ENCODE measurements at regions of chr1 and their contacts with region 1.

Region 1: DNA sequence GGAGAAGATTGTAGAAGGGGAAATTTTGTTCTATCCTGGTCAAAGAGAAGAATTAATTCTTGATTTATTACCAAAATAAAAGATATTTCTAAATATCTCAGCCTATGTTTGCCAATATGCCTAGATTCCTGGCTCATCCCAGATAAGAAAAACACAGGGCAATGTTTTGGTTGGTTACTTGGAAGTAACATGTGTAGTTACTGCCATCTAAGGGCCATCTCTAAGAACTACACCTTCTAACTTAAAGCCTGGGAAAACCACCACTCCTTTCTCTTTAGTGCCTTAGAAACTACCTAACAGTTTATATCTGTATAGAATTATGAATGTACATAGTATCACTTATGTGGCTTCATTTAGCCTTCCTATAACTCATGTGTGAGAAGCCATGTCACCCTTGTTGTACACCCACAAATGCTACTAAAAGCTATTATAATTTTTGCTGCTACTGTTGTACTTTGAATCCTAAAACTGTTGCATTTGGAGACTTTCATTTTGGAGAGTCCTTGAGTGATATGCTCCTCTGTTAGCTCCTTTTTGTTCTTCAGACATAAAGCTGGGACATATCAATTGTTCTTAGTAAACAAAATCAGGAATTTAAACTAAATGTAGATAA is 4.5 kb downstream of the AIM2 start:
- DNase-seq: peak; percentile 69
- ATAC-seq: no peak
- H3K4me3 ChIP-seq: no peak overlapping the region
- H3K4me3 Mint-ChIP-seq: peak overlapping the region; percentile 68
- H3K27ac ChIP-seq: peak overlapping the region in 1 of 2 donors; percentile 89
- H3K27ac Mint-ChIP-seq: peak overlapping the region; percentile 86
- H3K4me1 ChIP-seq: peaks cover 56 to 62% of the 10 kb centered on the region in 2 donors
- H3K4me1 Mint-ChIP-seq: peaks cover 65% of the 10 kb centered on the region
- H3K27me3 ChIP-seq: no peaks in the 10 kb centered on the region
- H3K27me3 Mint-ChIP-seq: no peaks in the 10 kb centered on the region
- CTCF ChIP-seq: peak; percentile 94

Region 2: DNA sequence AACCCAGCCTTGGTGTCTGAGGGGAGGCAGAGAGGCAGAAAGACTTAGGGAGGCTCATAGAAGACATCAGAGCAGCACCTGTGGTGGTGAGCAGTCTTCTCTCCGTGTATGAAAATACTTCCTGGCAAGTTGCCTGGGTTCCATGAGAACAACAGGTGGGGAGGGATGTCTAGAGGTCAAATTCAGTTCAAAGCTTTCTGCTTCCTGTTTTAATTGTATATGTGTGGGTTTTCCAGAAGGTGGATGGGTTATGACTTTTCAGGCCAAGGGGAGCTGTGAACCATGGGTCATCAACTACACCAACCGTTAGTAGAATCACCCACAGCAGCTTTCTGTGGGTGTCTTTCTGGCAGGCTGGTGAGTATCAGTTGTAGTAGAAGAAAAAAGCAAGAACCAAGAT is 1291.0 kb before region 1 on chr1:
- CTCF ChIA-PET with region 1: no interaction called
- POLR2A ChIA-PET with region 1: no interaction called
- intact Hi-C with region 1: loop called (anchors 10 kb)
- DNase-seq: peak; percentile 45
- ATAC-seq: peak; percentile 6
- H3K4me3 ChIP-seq: peak overlapping the region in 1 of 5 experiments; percentile 17
- H3K4me3 Mint-ChIP-seq: peak overlapping the region; percentile 64
- H3K27ac ChIP-seq: peak overlapping the region; percentile 31 to 53
- H3K27ac Mint-ChIP-seq: peak overlapping the region; percentile 93
- H3K4me1 ChIP-seq: peaks cover 83 to 90% of the 10 kb centered on the region in 2 donors
- H3K4me1 Mint-ChIP-seq: peaks cover 87% of the 10 kb centered on the region
- H3K27me3 ChIP-seq: no peaks in the 10 kb centered on the region
- H3K27me3 Mint-ChIP-seq: no peaks in the 10 kb centered on the region
- CTCF ChIP-seq: no peak

Region 3: GRCh38 chr1:158203693-158204457 is 868.2 kb before region 1 on chr1:
- CTCF ChIA-PET with region 1: interaction called, 27 read pairs
- POLR2A ChIA-PET with region 1: no interaction called
- intact Hi-C with region 1: loop called (anchors 2 kb)
- DNase-seq: peak; percentile 75
- ATAC-seq: peak; percentile 75
- H3K4me3 ChIP-seq: peak overlapping the region in 4 of 5 experiments; percentile 16 to 42 (median 30)
- H3K4me3 Mint-ChIP-seq: peak overlapping the region; percentile 74
- H3K27ac ChIP-seq: peak overlapping the region; percentile 4 to 72
- H3K27ac Mint-ChIP-seq: peak overlapping the region; percentile 70
- H3K4me1 ChIP-seq: peaks cover 11 to 14% of the 10 kb centered on the region in 2 donors
- H3K4me1 Mint-ChIP-seq: peaks cover 22% of the 10 kb centered on the region
- H3K27me3 ChIP-seq: no peaks in the 10 kb centered on the region
- H3K27me3 Mint-ChIP-seq: no peaks in the 10 kb centered on the region
- CTCF ChIP-seq: peak; percentile 95

Region 4: DNA sequence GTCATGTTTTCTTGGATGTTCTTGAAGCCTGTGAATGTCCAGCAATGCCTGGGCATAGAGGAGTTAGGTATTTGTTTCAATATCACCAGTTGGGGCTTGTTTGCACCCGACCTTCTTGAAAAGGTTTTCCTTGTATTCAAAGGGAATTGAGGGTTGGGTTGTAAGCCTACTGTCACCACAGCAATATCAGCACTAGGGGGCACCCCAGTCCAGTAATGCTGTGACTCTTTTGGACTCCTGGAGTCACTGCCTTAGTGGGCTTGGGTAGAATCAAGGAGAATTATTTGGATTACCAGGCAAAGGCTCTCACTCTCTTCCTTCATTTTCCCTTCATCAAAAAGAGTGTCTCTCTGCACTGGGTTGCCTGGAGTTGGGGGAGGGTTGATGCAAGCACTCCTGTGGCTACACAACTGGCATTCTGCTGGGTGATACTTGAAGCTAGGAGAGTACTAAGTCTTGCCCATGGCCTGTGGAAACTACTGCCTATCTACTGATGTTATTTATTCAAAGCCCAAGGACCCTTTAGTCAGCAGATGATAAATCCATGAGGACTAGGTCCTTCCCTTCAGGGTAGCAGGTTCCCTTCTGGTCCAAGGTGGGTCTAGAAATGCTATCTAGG is 565.6 kb before region 1 on chr1:
- CTCF ChIA-PET with region 1: interaction called, 10 read pairs
- POLR2A ChIA-PET with region 1: no interaction called
- intact Hi-C with region 1: loop called (anchors 5 kb)
- DNase-seq: peak; percentile 49
- ATAC-seq: peak; percentile 58
- H3K4me3 ChIP-seq: no peak overlapping the region
- H3K4me3 Mint-ChIP-seq: no peak overlapping the region
- H3K27ac ChIP-seq: no peak overlapping the region
- H3K27ac Mint-ChIP-seq: no peak overlapping the region
- H3K4me1 ChIP-seq: no peaks in the 10 kb centered on the region
- H3K4me1 Mint-ChIP-seq: no peaks in the 10 kb centered on the region
- H3K27me3 ChIP-seq: peaks cover 0 to 9% (median 0%) of the 10 kb centered on the region in 4 experiments
- H3K27me3 Mint-ChIP-seq: peaks cover 39% of the 10 kb centered on the region
- CTCF ChIP-seq: peak; percentile 58

Region 5: DNA sequence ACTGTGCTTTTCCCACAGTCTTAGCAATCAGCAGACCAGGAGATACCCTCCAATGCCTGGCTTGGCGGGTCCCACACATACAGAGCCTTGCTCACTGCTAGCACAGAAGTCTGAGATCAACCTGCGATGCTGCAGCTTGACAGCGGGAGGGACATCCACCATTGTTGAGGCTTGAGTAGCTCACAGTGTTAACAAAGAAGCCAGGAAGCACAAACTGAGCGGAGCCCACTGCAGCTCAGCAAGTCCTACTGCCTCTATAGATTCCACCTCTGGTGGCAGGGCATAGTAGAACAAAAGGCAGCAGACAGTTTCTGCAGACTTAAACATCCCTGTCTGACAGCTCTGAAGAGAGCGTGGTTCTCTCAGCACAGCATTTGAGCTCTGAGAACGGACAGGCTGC is 207.5 kb before region 1 on chr1:
- CTCF ChIA-PET with region 1: no interaction called
- POLR2A ChIA-PET with region 1: no interaction called
- intact Hi-C with region 1: no loop called
- DNase-seq: no peak
- ATAC-seq: no peak
- H3K4me3 ChIP-seq: no peak overlapping the region
- H3K4me3 Mint-ChIP-seq: no peak overlapping the region
- H3K27ac ChIP-seq: no peak overlapping the region
- H3K27ac Mint-ChIP-seq: no peak overlapping the region
- H3K4me1 ChIP-seq: no peaks in the 10 kb centered on the region
- H3K4me1 Mint-ChIP-seq: no peaks in the 10 kb centered on the region
- H3K27me3 ChIP-seq: peaks cover 0 to 8% (median 0%) of the 10 kb centered on the region in 4 experiments
- H3K27me3 Mint-ChIP-seq: peaks cover 35% of the 10 kb centered on the region
- CTCF ChIP-seq: no peak

Region 6: GRCh38 chr1:158998781-158999161 is 73.3 kb before region 1 on chr1:
- CTCF ChIA-PET with region 1: interaction called, 19 read pairs
- POLR2A ChIA-PET with region 1: interaction called, 3 read pairs
- intact Hi-C with region 1: loop called (anchors 1 kb)
- DNase-seq: peak; percentile 80
- ATAC-seq: peak; percentile 73
- H3K4me3 ChIP-seq: no peak overlapping the region
- H3K4me3 Mint-ChIP-seq: peak overlapping the region; percentile 55
- H3K27ac ChIP-seq: no peak overlapping the region
- H3K27ac Mint-ChIP-seq: no peak overlapping the region
- H3K4me1 ChIP-seq: peaks cover 6 to 12% of the 10 kb centered on the region in 2 donors
- H3K4me1 Mint-ChIP-seq: peaks cover 22% of the 10 kb centered on the region
- H3K27me3 ChIP-seq: no peaks in the 10 kb centered on the region
- H3K27me3 Mint-ChIP-seq: no peaks in the 10 kb centered on the region
- CTCF ChIP-seq: peak; percentile 98

Region 7: DNA sequence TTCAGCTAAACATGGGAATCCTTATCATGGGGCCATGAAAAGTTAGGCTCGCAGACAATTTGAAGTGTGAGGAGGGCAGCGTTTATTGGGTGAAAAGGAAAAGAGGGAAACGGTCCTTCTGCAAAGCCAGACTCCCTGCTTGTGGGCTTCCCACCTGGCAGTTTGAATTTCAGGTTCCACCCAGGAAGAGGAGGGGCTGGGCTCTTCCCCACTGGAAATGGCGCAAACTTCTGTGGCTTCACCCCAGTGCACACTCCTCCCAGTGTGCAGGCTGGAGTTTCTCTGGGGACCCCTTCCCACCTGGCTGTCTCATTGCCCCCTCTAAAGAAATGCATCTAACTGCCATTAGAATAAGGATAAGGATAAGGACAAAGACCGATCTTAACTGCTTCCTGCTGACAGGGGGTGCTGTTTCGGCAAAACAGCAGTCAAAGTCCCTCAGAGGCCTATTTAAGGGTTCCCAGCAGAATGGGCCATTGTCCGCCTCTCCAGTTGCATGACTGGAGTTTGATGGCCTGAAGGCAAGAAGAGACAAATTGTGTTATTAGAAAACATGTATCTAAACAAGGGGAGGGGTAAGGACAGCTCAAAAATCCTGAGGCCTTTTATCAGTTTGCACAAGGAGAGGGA is 15.9 kb before region 1 on chr1:
- CTCF ChIA-PET with region 1: interaction called, 222 read pairs
- POLR2A ChIA-PET with region 1: interaction called, 8 read pairs
- intact Hi-C with region 1: loop called (anchors 1 kb)
- DNase-seq: no peak
- ATAC-seq: no peak
- H3K4me3 ChIP-seq: peak overlapping the region in 1 of 5 experiments; percentile 11
- H3K4me3 Mint-ChIP-seq: peak overlapping the region; percentile 40
- H3K27ac ChIP-seq: peak overlapping the region; percentile 66 to 78
- H3K27ac Mint-ChIP-seq: peak overlapping the region; percentile 89
- H3K4me1 ChIP-seq: peaks cover 58 to 74% of the 10 kb centered on the region in 2 donors
- H3K4me1 Mint-ChIP-seq: peaks cover 74% of the 10 kb centered on the region
- H3K27me3 ChIP-seq: no peaks in the 10 kb centered on the region
- H3K27me3 Mint-ChIP-seq: no peaks in the 10 kb centered on the region
- CTCF ChIP-seq: no peak